ENCODE measurements at regions of chr1 and their contacts with region 1.

Region 1: GRCh38 chr1:40898431-40898901 is 36.3 kb upstream of the CITED4 start:
- DNase-seq: peak; percentile 79 to 91
- H3K4me3 ChIP-seq: peak overlapping the region; percentile 39; the same call in 1 of the 2 replicates
- H3K27ac ChIP-seq: peak overlapping the region; percentile 97
- H3K4me1 ChIP-seq: peaks cover 74% of the 10 kb centered on the region
- H3K27me3 ChIP-seq: no peaks in the 10 kb centered on the region
- CTCF ChIP-seq: no peak

Region 2: GRCh38 chr1:40877698-40878097 is 20.8 kb before region 1 on chr1:
- CTCF ChIA-PET with region 1: interaction called, 3 read pairs
- POLR2A ChIA-PET with region 1: interaction called, 9 read pairs
- intact Hi-C with region 1: loop called (anchors 1 kb)
- DNase-seq: peak; percentile 65 to 82
- H3K4me3 ChIP-seq: no peak overlapping the region
- H3K27ac ChIP-seq: peak overlapping the region; percentile 65
- H3K4me1 ChIP-seq: peaks cover 55% of the 10 kb centered on the region
- H3K27me3 ChIP-seq: no peaks in the 10 kb centered on the region
- CTCF ChIP-seq: no peak

Region 3: GRCh38 chr1:40919475-40920011 is 21.1 kb after region 1 on chr1:
- CTCF ChIA-PET with region 1: no interaction called
- POLR2A ChIA-PET with region 1: interaction called, 3 read pairs
- intact Hi-C with region 1: loop called (anchors 1 kb)
- DNase-seq: peak; percentile 76 to 77
- H3K4me3 ChIP-seq: no peak overlapping the region
- H3K27ac ChIP-seq: peak overlapping the region; percentile 34
- H3K4me1 ChIP-seq: peaks cover 21% of the 10 kb centered on the region
- H3K27me3 ChIP-seq: no peaks in the 10 kb centered on the region
- CTCF ChIP-seq: no peak

Measured in PC-9 (cell line).